Activated CD8-positive, alpha-beta T cell treated with anti-CD3 and anti-CD28 coated beads for 36 hours (primary cell): ENCODE measurements at regions of chr1 and their contacts with region 1.

Region 1: DNA sequence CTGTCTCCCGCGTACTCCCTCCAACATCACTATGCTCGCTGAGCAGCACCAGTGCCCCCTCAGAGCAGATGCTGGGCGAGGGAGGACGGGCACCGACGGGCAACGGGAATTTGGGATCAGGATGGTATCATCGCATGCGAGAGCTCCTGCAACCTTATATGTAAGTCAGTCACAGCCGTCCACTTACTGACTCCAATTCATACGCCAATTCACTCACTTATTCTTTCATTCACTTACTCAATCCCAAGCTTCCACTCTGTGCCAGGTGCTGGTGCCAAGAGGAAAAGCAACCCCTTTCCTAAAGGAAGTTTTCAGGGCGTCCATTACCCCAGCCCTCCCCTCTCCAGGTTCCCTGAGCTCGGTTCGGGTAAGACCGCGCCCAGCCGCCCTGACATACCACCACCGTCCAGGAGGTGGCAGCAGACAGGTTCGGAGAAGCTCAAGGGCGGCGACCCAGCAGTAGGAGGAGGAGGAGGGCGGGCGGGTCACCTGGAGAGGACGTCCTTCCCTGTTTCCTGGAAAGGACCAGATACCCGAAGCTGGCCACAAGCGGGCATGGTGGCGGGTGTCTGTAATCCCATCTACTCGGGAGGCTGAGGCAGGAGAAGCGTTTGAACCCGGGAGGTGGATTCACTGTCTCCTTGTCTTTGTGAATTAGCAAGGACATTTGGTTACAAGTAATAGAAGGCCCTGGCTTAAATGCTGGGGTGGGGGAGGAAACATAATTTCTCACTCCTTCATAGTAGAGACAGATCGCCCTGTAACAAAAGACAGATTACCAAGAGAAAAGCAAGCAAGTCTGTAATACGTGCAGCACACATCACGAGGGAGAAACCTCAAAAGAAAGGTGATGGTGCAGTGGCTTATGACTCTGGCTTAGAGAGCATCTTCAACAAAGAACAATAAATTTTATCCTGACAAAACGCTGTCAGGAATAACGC is 7.6 kb upstream of the IL22RA1 start:
- DNase-seq: peak; percentile 95
- ATAC-seq: peak; percentile 97
- H3K4me3 Mint-ChIP-seq: peak overlapping the region; percentile 61
- H3K27ac Mint-ChIP-seq: no peak overlapping the region
- H3K4me1 Mint-ChIP-seq: peaks cover 18% of the 10 kb centered on the region
- H3K27me3 Mint-ChIP-seq: peaks cover 36% of the 10 kb centered on the region
- CTCF ChIP-seq: peak; percentile 95

Region 2: GRCh38 chr1:23951571-23952095 is 198.9 kb before region 1 on chr1:
- CTCF ChIA-PET with region 1: no interaction called
- POLR2A ChIA-PET with region 1: no interaction called
- intact Hi-C with region 1: no loop called
- DNase-seq: no peak
- ATAC-seq: no peak
- H3K4me3 Mint-ChIP-seq: no peak overlapping the region
- H3K27ac Mint-ChIP-seq: no peak overlapping the region
- H3K4me1 Mint-ChIP-seq: peaks cover 13% of the 10 kb centered on the region
- H3K27me3 Mint-ChIP-seq: no peaks in the 10 kb centered on the region
- CTCF ChIP-seq: no peak

Region 3: DNA sequence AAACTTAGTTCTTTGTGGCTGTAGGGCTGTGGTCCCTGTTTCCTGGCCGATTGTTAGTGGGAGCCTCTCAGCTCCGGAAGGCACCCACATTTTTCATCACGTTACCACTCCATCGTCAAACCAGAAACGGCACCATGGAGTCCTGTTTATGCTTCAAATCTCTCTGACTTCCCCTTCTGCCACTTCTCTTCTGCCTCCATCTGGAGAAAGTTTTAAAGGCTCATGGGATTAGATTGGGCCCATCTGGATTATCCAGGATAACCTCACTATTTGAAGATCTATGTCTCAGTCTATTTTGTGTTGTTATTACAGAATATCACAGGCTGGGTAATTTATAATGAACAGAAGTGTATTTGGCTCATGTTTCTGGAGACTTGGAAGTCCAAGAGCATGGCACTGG is 11.7 kb after region 1 on chr1:
- CTCF ChIA-PET with region 1: interaction called, 22 read pairs
- POLR2A ChIA-PET with region 1: interaction called, 5 read pairs
- intact Hi-C with region 1: no loop called
- DNase-seq: no peak
- ATAC-seq: no peak
- H3K4me3 Mint-ChIP-seq: no peak overlapping the region
- H3K27ac Mint-ChIP-seq: no peak overlapping the region
- H3K4me1 Mint-ChIP-seq: no peaks in the 10 kb centered on the region
- H3K27me3 Mint-ChIP-seq: no peaks in the 10 kb centered on the region
- CTCF ChIP-seq: no peak

Region 4: GRCh38 chr1:24169286-24169685 is 18.8 kb after region 1 on chr1:
- CTCF ChIA-PET with region 1: interaction called, 22 read pairs
- POLR2A ChIA-PET with region 1: interaction called, 5 read pairs
- intact Hi-C with region 1: no loop called
- DNase-seq: no peak
- ATAC-seq: no peak
- H3K4me3 Mint-ChIP-seq: no peak overlapping the region
- H3K27ac Mint-ChIP-seq: no peak overlapping the region
- H3K4me1 Mint-ChIP-seq: no peaks in the 10 kb centered on the region
- H3K27me3 Mint-ChIP-seq: no peaks in the 10 kb centered on the region
- CTCF ChIP-seq: no peak

Region 5: DNA sequence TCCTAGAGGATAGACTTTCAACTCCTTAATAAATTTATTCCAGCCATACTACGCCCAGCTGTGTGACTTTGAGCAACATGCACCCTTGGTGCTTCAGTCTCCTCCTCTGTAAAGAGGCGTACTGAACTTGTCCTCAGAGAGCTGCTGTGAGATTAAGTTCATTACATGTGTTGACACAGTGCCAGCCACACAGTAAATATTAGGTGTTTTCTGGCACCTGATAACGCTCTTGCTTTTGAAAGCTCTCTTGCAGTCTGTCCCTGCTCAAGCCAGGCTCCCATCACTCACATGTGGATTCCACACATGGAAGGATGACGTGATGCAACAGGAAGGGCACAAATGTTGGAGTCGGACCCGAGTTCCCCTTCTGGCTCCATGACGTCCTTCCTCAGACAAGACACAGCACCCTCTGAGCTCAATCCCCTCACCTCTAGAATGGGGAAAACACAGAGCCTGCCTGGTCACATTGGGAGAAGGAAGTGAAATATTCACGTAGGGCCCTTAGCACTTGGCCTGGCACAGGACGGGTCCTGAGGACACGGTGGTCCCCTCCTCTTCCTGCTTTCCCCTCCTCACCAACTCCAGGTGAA is 28.8 kb after region 1 on chr1:
- CTCF ChIA-PET with region 1: interaction called, 15 read pairs
- POLR2A ChIA-PET with region 1: interaction called, 3 read pairs
- intact Hi-C with region 1: no loop called
- DNase-seq: no peak
- ATAC-seq: no peak
- H3K4me3 Mint-ChIP-seq: no peak overlapping the region
- H3K27ac Mint-ChIP-seq: no peak overlapping the region
- H3K4me1 Mint-ChIP-seq: peaks cover 7% of the 10 kb centered on the region
- H3K27me3 Mint-ChIP-seq: no peaks in the 10 kb centered on the region
- CTCF ChIP-seq: no peak

Region 6: DNA sequence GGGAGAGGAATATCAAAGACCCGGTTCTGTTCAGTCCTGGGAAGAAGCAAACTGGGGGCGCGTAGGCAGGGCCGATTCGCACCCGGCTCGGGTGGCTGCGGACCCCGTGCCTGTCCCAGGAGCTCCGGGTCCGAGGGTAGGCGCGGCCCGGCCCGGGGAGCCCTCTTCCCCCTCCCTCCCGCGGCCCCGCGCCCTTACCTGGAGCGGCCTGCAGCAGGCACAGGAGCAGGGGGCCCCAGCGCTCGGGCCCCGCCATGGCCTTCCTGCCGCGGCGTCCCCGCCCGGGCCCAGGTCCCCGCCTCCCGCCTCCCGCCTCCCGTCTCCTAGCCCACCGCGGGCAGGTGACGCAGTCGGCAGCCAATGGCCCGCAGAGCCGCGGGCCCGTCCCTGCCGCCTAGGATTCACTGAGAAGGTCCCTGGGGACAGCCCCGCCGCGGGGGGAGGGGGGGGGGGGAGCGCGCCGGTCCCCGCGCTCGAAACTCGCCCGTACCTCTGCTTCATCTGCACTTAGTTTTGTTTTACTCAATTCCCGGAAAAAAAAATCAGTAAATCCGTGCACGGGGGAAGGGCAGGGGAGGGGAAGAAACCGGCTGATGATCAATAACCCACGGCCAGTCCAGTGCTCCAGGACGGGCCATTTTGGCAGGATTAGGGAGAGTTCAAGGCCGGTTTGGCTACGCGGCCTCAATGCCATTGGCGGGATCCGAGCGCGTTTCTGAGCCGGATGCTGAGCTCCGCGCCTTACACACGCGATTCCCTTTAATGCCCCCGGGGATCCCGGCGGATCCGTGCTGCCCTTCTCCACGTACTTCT is 36.7 kb after region 1 on chr1 and contains the start of gene IFNLR1:
- CTCF ChIA-PET with region 1: interaction called, 18 read pairs
- POLR2A ChIA-PET with region 1: interaction called, 6 read pairs
- intact Hi-C with region 1: loop called (anchors 5 kb)
- DNase-seq: peak; percentile 91
- ATAC-seq: peak; percentile 90
- H3K4me3 Mint-ChIP-seq: peak within 1 kb of the TSS; percentile 78
- H3K27ac Mint-ChIP-seq: peak within 1 kb of the TSS; percentile 56
- H3K4me1 Mint-ChIP-seq: peaks cover 65% of the 10 kb centered on the region
- H3K27me3 Mint-ChIP-seq: no peaks in the 10 kb centered on the region
- CTCF ChIP-seq: no peak
- total RNA-seq, gene IFNLR1: 4.8 to 6.4 TPM

Region 7: GRCh38 chr1:24210195-24210627 is 59.7 kb after region 1 on chr1:
- CTCF ChIA-PET with region 1: no interaction called
- POLR2A ChIA-PET with region 1: no interaction called
- intact Hi-C with region 1: no loop called
- DNase-seq: no peak
- ATAC-seq: no peak
- H3K4me3 Mint-ChIP-seq: no peak overlapping the region
- H3K27ac Mint-ChIP-seq: no peak overlapping the region
- H3K4me1 Mint-ChIP-seq: no peaks in the 10 kb centered on the region
- H3K27me3 Mint-ChIP-seq: peaks cover 17% of the 10 kb centered on the region
- CTCF ChIP-seq: no peak

Region 8: DNA sequence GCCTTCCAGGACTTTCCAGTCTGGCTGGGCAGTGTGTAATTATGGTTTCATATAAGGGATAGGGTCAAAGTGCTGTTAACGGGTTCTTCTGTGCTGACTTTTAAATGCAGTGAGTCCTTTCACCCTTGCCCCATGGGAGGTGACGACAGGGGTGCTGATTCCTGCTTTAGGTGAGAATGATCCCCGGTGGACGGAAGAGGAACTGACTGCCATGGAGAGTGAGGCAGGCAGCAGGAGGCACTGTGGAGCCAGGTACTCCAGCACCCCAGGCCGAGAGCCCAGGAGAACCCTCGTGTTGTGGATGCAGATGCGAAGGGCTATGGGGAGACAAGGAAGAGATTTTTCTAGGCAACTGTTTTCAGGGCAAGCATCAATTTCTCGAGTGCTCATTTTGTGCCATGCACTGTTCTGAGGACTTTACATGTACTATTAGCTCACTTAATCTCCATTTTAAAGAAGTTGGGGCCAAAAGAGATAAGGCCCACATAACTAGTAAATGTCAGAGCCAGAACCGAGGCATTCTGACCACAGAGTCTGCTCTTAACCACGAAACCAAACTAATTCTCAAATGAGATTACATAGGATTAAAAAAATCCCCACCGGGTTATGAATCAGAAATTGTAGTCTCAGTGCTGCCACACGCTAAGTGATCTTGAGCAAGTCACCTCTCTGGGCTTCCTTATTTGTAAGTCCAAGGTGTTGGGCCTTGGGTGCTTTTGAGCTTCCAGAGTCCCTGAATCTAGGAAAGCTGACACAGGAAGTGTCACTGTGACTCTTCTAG is 234.8 kb after region 1 on chr1:
- CTCF ChIA-PET with region 1: interaction called, 87 read pairs
- POLR2A ChIA-PET with region 1: interaction called, 5 read pairs
- intact Hi-C with region 1: no loop called
- DNase-seq: peak; percentile 61
- ATAC-seq: peak; percentile 57
- H3K4me3 Mint-ChIP-seq: no peak overlapping the region
- H3K27ac Mint-ChIP-seq: peak overlapping the region; percentile 14
- H3K4me1 Mint-ChIP-seq: peaks cover 28% of the 10 kb centered on the region
- H3K27me3 Mint-ChIP-seq: no peaks in the 10 kb centered on the region
- CTCF ChIP-seq: peak; percentile 74